B cell (primary cell): ENCODE measurements at regions of chr10 and their contacts with region 1.

Region 1: DNA sequence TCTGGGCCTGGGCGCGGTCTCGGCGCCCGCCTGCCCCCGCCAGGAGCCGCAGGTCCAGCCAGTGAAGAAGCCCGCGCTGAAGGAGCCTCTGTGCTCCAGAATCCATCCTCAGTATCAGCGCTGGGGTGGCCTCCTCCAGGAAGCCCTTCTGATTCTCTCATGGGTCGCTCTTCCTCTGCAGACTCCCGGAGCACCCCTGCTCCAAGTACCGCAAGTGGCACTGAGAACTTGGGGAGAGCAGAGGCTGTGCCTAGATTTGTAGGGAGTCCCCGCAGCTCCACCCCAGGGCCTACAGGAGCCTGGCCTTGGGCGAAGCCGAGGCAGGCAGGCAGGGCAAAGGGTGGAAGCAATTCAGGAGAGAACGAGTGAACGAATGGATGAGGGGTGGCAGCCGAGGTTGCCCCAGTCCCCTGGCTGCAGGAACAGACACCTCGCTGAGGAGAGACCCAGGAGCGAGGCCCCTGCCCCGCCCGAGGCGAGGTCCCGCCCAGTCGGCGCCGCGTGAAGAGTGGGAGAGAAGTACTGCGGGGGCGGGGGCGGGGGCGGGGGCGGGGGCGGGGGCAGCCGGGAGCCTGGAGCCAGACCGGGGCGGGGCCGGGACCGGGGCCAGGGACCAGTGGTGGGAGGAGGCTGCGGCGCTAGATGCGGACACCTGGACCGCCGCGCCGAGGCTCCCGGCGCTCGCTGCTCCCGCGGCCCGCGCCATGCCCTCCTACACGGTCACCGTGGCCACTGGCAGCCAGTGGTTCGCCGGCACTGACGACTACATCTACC is at the start of gene ALOX5:
- DNase-seq: peak; percentile 74
- ATAC-seq: peak; percentile 64
- H3K4me3 ChIP-seq: peak within 1 kb of the TSS; percentile 71 to 81 (median 77)
- H3K4me3 Mint-ChIP-seq: peak within 1 kb of the TSS; percentile 96
- H3K27ac ChIP-seq: peak within 1 kb of the TSS; percentile 78 to 89
- H3K27ac Mint-ChIP-seq: peak within 1 kb of the TSS; percentile 95
- H3K4me1 ChIP-seq: peaks cover 78 to 85% of the 10 kb centered on the region in 2 donors
- H3K4me1 Mint-ChIP-seq: peaks cover 89% of the 10 kb centered on the region
- H3K27me3 ChIP-seq: no peaks in the 10 kb centered on the region
- H3K27me3 Mint-ChIP-seq: no peaks in the 10 kb centered on the region
- CTCF ChIP-seq: no peak
- total RNA-seq, gene ALOX5: 351 and 354 TPM in 2 replicates

Region 2: DNA sequence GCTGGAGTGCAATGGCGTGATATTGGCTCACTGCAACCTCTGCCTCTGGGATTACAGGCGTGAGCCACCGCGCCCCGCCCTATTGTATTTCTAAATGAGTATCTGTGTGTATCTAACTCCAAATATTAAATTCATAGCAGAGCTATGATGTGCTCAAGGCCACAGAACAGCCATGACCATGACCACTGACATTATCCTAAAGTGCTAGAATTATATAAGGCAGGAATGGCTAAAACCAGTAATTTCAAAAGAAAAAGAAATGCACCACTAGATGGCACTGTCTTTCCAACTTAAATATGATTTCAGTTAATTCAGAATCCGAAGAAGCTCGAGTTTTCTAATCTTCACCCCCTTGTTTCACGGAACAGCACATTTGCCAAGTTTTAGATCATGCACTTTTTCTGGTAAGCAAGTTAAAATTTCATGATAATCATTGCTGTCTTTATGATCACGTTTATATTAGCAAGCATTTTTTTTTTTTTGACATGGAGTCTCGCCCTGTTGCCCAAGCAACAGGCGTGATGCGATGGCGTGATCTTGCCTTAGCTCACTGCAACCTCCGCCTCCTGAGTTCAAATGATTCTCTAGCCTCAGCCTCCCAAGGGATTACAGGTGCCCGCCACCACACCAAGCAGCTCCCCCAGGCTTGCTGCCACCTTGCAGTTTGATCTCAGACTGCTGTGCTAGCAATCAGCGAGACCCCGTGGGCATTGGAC is 123.6 kb before region 1 on chr10:
- CTCF ChIA-PET with region 1: interaction called, 9 read pairs
- POLR2A ChIA-PET with region 1: interaction called, 4 read pairs
- intact Hi-C with region 1: loop called (anchors 1 kb)
- DNase-seq: peak; percentile 82
- ATAC-seq: peak; percentile 90
- H3K4me3 ChIP-seq: peak overlapping the region in 4 of 5 experiments; percentile 1 to 56 (median 44)
- H3K4me3 Mint-ChIP-seq: peak overlapping the region; percentile 86
- H3K27ac ChIP-seq: peak overlapping the region; percentile 0 to 60
- H3K27ac Mint-ChIP-seq: peak overlapping the region; percentile 82
- H3K4me1 ChIP-seq: peaks cover 15 to 18% of the 10 kb centered on the region in 2 donors
- H3K4me1 Mint-ChIP-seq: peaks cover 26% of the 10 kb centered on the region
- H3K27me3 ChIP-seq: no peaks in the 10 kb centered on the region
- H3K27me3 Mint-ChIP-seq: peaks cover 7% of the 10 kb centered on the region
- CTCF ChIP-seq: peak; percentile 83

Region 3: GRCh38 chr10:45325116-45325515 is 48.6 kb before region 1 on chr10:
- CTCF ChIA-PET with region 1: no interaction called
- POLR2A ChIA-PET with region 1: no interaction called
- intact Hi-C with region 1: no loop called
- DNase-seq: no peak
- ATAC-seq: no peak
- H3K4me3 ChIP-seq: no peak overlapping the region
- H3K4me3 Mint-ChIP-seq: no peak overlapping the region
- H3K27ac ChIP-seq: no peak overlapping the region
- H3K27ac Mint-ChIP-seq: no peak overlapping the region
- H3K4me1 ChIP-seq: no peaks in the 10 kb centered on the region
- H3K4me1 Mint-ChIP-seq: no peaks in the 10 kb centered on the region
- H3K27me3 ChIP-seq: no peaks in the 10 kb centered on the region
- H3K27me3 Mint-ChIP-seq: no peaks in the 10 kb centered on the region
- CTCF ChIP-seq: no peak

Region 4: DNA sequence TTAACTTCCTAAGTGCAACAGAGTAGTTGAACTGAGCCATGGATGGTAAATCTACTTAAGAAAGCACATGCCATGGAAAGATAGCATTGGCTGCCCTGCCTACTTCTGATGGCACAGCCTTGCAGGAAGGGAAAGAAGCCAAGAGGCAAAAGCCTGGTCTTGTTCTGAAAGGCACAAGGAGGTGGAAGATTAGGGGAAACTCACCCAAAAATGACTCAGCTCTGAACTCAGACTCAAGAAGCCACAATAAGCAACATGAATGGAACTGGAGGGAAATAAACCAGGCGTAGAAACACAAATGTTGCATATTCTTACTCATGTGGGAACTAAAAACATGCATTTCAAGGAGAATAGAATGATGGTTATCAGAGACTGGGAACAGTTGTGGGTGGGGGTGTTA is 20.6 kb before region 1 on chr10:
- CTCF ChIA-PET with region 1: interaction called, 8 read pairs
- POLR2A ChIA-PET with region 1: interaction called, 5 read pairs
- intact Hi-C with region 1: loop called (anchors 2 kb)
- DNase-seq: no peak
- ATAC-seq: no peak
- H3K4me3 ChIP-seq: no peak overlapping the region
- H3K4me3 Mint-ChIP-seq: no peak overlapping the region
- H3K27ac ChIP-seq: no peak overlapping the region
- H3K27ac Mint-ChIP-seq: no peak overlapping the region
- H3K4me1 ChIP-seq: peaks cover 13 to 17% of the 10 kb centered on the region in 2 donors
- H3K4me1 Mint-ChIP-seq: peaks cover 51% of the 10 kb centered on the region
- H3K27me3 ChIP-seq: no peaks in the 10 kb centered on the region
- H3K27me3 Mint-ChIP-seq: no peaks in the 10 kb centered on the region
- CTCF ChIP-seq: no peak

Region 5: GRCh38 chr10:45594276-45595106 is 220.7 kb after region 1 on chr10:
- CTCF ChIA-PET with region 1: no interaction called
- POLR2A ChIA-PET with region 1: interaction called, 3 read pairs
- intact Hi-C with region 1: loop called (anchors 2 kb)
- DNase-seq: peak; percentile 95
- ATAC-seq: peak; percentile 88
- H3K4me3 ChIP-seq: peak overlapping the region; percentile 72 to 86 (median 83)
- H3K4me3 Mint-ChIP-seq: peak overlapping the region; percentile 96
- H3K27ac ChIP-seq: peak overlapping the region; percentile 87 to 88
- H3K27ac Mint-ChIP-seq: peak overlapping the region; percentile 98
- H3K4me1 ChIP-seq: peaks cover 26% of the 10 kb centered on the region in 2 donors
- H3K4me1 Mint-ChIP-seq: peaks cover 38% of the 10 kb centered on the region
- H3K27me3 ChIP-seq: no peaks in the 10 kb centered on the region
- H3K27me3 Mint-ChIP-seq: peaks cover 6% of the 10 kb centered on the region
- CTCF ChIP-seq: no peak

Region 6: GRCh38 chr10:46030091-46030937 is 656.6 kb after region 1 on chr10 and contains the start of gene NCOA4:
- CTCF ChIA-PET with region 1: no interaction called
- POLR2A ChIA-PET with region 1: no interaction called
- intact Hi-C with region 1: loop called (anchors 5 kb)
- DNase-seq: peak; percentile 97
- ATAC-seq: peak; percentile 98
- H3K4me3 ChIP-seq: peak within 1 kb of the TSS; percentile 57 to 97 (median 96)
- H3K4me3 Mint-ChIP-seq: peak within 1 kb of the TSS; percentile 95
- H3K27ac ChIP-seq: peak within 1 kb of the TSS; percentile 80 to 97
- H3K27ac Mint-ChIP-seq: peak within 1 kb of the TSS; percentile 91
- H3K4me1 ChIP-seq: peaks cover 26 to 38% of the 10 kb centered on the region in 2 donors
- H3K4me1 Mint-ChIP-seq: peaks cover 44% of the 10 kb centered on the region
- H3K27me3 ChIP-seq: no peaks in the 10 kb centered on the region
- H3K27me3 Mint-ChIP-seq: peaks cover 4% of the 10 kb centered on the region
- CTCF ChIP-seq: peak; percentile 78
- total RNA-seq, gene NCOA4: 69.7 and 71.2 TPM in 2 replicates